T-cell (primary cell): ENCODE measurements at regions of chr15 and their contacts with region 1.

Region 1: GRCh38 chr15:84588053-84588874 is 12.5 kb upstream of the ZSCAN2 start:
- DNase-seq: peak; percentile 66 to 90 (median 78)
- ATAC-seq: peak; percentile 99 to 100 (median 100)
- H3K4me3 ChIP-seq: no peak overlapping the region
- H3K4me3 Mint-ChIP-seq: peak overlapping the region in 2 of 3 donors; percentile 39 to 42
- H3K27ac ChIP-seq: no peak overlapping the region
- H3K27ac Mint-ChIP-seq: no peak overlapping the region
- H3K4me1 ChIP-seq: peaks cover 0 to 7% of the 10 kb centered on the region in 2 experiments
- H3K4me1 Mint-ChIP-seq: peaks cover 0 to 5% (median 2%) of the 10 kb centered on the region in 3 donors
- H3K27me3 ChIP-seq: no peaks in the 10 kb centered on the region
- H3K27me3 Mint-ChIP-seq: peaks cover 4 to 5% of the 10 kb centered on the region in 2 donors

Region 2: GRCh38 chr15:84928843-84929168 is 340.5 kb after region 1 on chr15:
- CTCF ChIA-PET with region 1: interaction called, 5 to 11 read pairs
- POLR2A ChIA-PET with region 1: interaction called in 1 of 2 experiments, 3 read pairs
- DNase-seq: no peak
- ATAC-seq: no peak
- H3K4me3 ChIP-seq: no peak overlapping the region
- H3K4me3 Mint-ChIP-seq: no peak overlapping the region
- H3K27ac ChIP-seq: no peak overlapping the region
- H3K27ac Mint-ChIP-seq: no peak overlapping the region
- H3K4me1 ChIP-seq: peaks cover 0 to 5% of the 10 kb centered on the region in 2 experiments
- H3K4me1 Mint-ChIP-seq: peaks cover 5 to 8% (median 6%) of the 10 kb centered on the region in 3 donors
- H3K27me3 ChIP-seq: peaks cover 0 to 4% of the 10 kb centered on the region in 2 experiments
- H3K27me3 Mint-ChIP-seq: no peaks in the 10 kb centered on the region